Lower leg skin (tissue), 4 donors: ENCODE measurements at regions of chr11 and their contacts with region 1.

Region 1: GRCh38 chr11:83852775-83853442 is 566.7 kb upstream of the CCDC90B start:
- DNase-seq: no peak
- H3K4me3 ChIP-seq: no peak overlapping the region
- CTCF ChIP-seq: no peak
- POLR2A ChIP-seq: no peak

Region 2: DNA sequence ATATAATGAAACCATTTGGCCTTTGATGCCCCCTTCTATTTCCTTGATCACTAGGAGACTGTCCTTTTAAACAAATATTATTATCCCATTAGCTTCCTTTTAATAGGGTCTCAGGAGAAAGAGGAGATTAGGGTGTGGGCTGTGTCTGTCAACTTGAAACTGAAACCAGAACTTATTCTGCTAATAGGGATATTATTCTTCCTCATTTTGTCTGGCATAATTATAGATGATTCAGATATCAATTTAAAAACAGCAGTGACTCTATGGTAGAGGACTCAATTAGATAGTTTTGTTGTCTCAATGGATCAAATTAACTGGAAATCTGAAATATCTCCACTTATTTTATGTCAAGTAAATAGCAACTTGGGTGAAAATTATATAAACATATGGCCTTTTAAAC is 18.1 kb after region 1 on chr11:
- intact Hi-C with region 1: loop called (anchors 2 kb)
- DNase-seq: no peak
- H3K4me3 ChIP-seq: no peak overlapping the region
- CTCF ChIP-seq: no peak
- POLR2A ChIP-seq: no peak

Region 3: DNA sequence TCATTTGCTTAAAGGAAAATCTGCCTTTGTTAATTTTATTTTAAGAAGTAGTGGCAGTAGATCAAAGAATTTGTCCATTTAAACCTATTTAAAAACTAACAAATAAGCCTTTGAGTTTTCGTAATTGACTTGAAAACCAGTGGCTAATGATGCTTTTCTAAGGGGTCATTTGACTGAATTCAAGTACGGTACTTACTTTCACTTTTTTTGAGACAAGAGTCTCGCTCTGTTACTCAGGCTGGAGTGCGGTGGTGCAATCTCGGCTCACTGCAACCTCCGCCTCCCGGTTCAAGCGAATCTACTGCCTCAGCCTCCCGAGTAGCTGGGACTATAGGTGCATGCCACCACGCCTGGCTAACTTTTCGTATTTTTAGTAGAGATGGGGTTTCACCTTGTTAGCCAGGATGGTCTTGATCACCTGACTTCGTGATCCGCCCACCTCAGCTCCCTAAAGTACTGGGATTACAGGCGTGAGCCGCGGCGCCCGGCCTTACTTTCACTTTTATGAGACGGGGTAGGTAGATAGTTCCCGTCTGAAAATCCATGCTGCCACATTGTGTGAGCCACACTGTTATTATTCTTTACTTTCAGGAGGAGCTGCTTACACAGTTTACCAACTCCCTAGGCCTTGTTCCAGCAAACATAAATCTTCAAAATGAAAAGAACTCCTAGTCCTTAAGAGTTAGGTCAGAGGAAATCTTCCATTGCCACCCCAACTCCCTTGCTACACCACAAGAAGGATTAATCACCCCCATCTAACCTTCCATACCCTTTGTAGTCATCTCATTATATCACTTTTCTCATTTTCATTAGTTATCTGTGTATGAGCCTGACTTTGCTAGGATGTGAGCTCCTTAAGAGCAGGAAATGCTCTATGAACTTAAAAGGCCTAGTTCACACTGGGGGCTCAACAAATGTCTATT is 359.8 kb after region 1 on chr11:
- intact Hi-C with region 1: no loop called
- DNase-seq: no peak
- H3K4me3 ChIP-seq: no peak overlapping the region
- CTCF ChIP-seq: no peak
- POLR2A ChIP-seq: no peak